Activated B cell treated with CpG ODN at 0.5 μM for 24 hours (primary cell): ENCODE measurements at regions of chr13 and their contacts with region 1.

Region 1: GRCh38 chr13:37074703-37075102 is 15.2 kb upstream of the SUPT20H start:
- DNase-seq: no peak
- ATAC-seq: no peak
- H3K4me3 Mint-ChIP-seq: no peak overlapping the region
- H3K27ac Mint-ChIP-seq: no peak overlapping the region
- H3K4me1 Mint-ChIP-seq: peaks cover 2% of the 10 kb centered on the region
- H3K27me3 Mint-ChIP-seq: peaks cover 4% of the 10 kb centered on the region
- CTCF ChIP-seq: no peak

Region 2: DNA sequence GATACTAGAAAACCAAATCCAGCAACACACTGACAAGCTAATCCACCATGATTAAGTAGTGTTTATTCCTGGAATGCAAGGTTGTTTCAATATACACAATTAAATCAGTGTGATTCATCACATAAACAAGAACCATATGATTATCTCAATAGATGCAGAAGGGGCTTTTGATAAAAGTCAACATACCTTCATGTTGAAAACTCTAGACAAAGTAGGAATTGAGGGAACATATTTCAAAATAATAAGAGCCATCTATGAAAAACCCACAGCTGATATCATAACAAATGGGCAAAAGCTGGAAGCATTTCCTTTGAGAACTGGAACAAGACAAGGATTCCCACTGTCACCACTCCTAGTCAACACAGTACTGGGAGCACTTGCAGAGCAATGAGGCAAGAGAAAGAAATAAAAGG is 244.3 kb after region 1 on chr13:
- CTCF ChIA-PET with region 1: no interaction called
- POLR2A ChIA-PET with region 1: no interaction called
- intact Hi-C with region 1: no loop called
- DNase-seq: no peak
- ATAC-seq: no peak
- H3K4me3 Mint-ChIP-seq: no peak overlapping the region
- H3K27ac Mint-ChIP-seq: no peak overlapping the region
- H3K4me1 Mint-ChIP-seq: no peaks in the 10 kb centered on the region
- H3K27me3 Mint-ChIP-seq: no peaks in the 10 kb centered on the region
- CTCF ChIP-seq: no peak

Region 3: DNA sequence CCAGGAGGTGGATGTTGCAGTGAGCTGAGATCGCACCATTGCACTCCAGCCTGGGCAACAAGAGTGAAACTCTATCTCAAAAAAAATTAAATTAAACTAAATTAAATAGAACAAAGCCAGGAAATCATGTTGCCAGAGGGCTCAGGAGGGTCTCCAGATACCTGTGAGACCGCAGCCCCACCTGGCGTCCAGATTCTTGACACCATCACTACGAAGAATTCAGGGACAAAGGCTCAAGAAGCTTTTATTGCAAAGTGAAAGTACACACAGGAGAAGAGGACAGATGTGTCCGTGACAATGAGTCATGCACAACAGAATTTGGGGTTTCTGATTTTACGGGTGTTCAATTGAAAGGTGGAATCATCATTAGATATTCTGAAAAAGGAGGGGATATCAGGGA is 1839.4 kb after region 1 on chr13:
- CTCF ChIA-PET with region 1: interaction called, 3 read pairs
- POLR2A ChIA-PET with region 1: no interaction called
- intact Hi-C with region 1: loop called (anchors 1 kb)
- DNase-seq: no peak
- ATAC-seq: no peak
- H3K4me3 Mint-ChIP-seq: no peak overlapping the region
- H3K27ac Mint-ChIP-seq: no peak overlapping the region
- H3K4me1 Mint-ChIP-seq: no peaks in the 10 kb centered on the region
- H3K27me3 Mint-ChIP-seq: no peaks in the 10 kb centered on the region
- CTCF ChIP-seq: no peak